ENCODE measurements at regions of chr1 and their contacts with region 1.

Region 1: GRCh38 chr1:184754476-184755225 is at the start of gene EDEM3:
- DNase-seq: peak; percentile 91
- ATAC-seq: peak; percentile 96
- H3K4me3 Mint-ChIP-seq: peak within 1 kb of the TSS; percentile 89
- H3K27ac Mint-ChIP-seq: peak within 1 kb of the TSS; percentile 82
- H3K4me1 Mint-ChIP-seq: peaks cover 27% of the 10 kb centered on the region
- H3K27me3 Mint-ChIP-seq: peaks cover 10% of the 10 kb centered on the region
- total RNA-seq, gene EDEM3: 18.8 to 29.9 TPM

Region 2: DNA sequence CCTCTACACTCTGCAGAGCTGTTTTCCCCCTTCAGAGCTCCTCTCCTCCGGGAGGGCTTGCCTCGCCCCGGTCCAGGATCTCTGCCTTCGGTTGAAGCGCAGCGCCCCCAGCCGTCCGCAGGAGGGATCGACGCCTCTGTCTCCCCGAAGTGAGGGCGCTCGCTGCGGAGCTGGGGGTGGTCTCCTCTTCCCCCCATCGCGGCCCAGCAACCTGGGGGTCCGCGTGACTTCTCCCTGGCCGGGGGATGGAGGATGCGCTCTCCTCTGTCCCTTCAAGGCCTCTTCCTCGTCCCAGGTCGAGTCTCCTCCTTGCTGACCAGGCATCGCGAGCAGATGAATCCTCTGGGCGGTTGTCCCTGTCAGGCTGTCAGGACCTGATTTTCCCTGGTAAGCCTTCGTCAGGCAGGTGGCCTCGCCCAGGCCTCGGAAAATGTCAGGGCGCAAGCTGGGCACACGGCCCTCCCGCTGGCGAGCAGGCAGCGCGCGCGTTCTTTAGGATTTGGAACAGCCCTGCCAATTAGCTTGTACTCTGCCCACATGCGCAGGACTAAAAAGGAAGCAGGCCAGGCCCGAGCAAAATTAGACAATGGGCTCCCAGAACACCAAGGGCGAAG is 90.5 kb before region 1 on chr1:
- POLR2A ChIA-PET with region 1: no interaction called
- DNase-seq: peak; percentile 67
- ATAC-seq: peak; percentile 72
- H3K4me3 Mint-ChIP-seq: peak overlapping the region; percentile 42
- H3K27ac Mint-ChIP-seq: no peak overlapping the region
- H3K4me1 Mint-ChIP-seq: peaks cover 3% of the 10 kb centered on the region
- H3K27me3 Mint-ChIP-seq: peaks cover 9% of the 10 kb centered on the region

Region 3: DNA sequence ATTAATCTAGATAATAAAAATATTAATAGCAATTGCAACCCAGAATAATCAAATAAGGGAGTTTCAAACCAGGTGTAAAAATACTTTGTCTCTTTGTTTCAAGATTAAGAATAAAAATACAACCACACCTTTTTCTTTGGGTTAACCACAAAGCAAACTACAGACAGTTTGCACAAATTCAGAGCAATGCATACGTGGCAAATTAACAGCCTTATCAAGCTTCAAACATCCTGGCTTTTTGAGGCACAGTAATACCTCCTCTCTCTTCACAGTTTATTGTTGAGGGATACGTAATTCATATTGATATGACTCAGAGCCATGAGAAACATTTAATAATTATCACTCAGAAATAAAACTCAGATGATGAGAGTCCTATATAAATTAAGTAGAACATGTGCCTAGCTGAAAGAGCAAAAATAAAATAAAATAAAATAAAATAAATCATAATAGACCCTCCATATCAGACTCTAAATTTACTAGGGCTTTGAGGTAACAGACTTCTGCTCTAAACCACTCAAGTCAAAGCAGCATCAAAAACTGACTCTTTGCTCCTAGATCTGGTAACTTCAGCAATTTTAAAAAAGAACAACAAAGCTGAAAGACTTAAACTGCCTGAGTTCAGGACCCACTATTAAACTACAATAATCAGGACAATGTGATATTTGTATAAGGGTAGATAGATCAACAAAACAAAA is 11.4 kb before region 1 on chr1:
- POLR2A ChIA-PET with region 1: interaction called, 11 read pairs
- DNase-seq: no peak
- ATAC-seq: peak; percentile 98
- H3K4me3 Mint-ChIP-seq: peak overlapping the region; percentile 62
- H3K27ac Mint-ChIP-seq: no peak overlapping the region
- H3K4me1 Mint-ChIP-seq: peaks cover 24% of the 10 kb centered on the region
- H3K27me3 Mint-ChIP-seq: no peaks in the 10 kb centered on the region

Region 4: DNA sequence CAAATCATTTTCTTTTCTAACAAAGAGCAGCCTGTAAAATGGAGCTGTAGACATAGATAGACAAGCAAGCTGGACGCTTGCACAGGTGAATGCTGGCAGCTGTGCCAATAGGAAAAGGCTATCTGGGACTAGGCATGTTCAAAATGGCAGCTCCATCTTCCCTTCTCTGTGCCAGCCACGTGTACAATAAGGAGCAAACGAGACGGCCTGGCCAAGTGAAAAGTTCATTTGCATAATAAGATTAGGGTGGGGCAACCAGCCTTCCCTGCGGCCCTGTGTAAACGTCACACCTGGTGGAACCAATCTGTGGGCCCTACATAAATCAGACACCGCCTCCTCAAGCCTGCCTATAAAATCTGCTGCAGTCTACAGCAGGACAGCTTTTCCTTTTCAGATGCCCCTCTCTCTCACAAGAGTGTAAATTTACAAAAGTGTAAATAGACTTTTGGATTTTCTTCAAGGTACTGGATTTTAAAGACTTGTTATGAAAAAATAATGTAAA is 16.6 kb after region 1 on chr1:
- POLR2A ChIA-PET with region 1: no interaction called
- DNase-seq: no peak
- ATAC-seq: no peak
- H3K4me3 Mint-ChIP-seq: no peak overlapping the region
- H3K27ac Mint-ChIP-seq: no peak overlapping the region
- H3K4me1 Mint-ChIP-seq: no peaks in the 10 kb centered on the region
- H3K27me3 Mint-ChIP-seq: peaks cover 18% of the 10 kb centered on the region